GM12878 (cell line): ENCODE measurements at regions of chrX and their contacts with region 1.

Region 1: GRCh38 chrX:19904778-19905367 is 17.5 kb upstream of the SH3KBP1 start:
- DNase-seq: no peak
- ATAC-seq: peak; percentile 93
- H3K4me3 ChIP-seq: no peak overlapping the region
- H3K27ac ChIP-seq: no peak overlapping the region
- H3K4me1 ChIP-seq: no peaks in the 10 kb centered on the region; the same call in 1 of the 2 replicates
- H3K27me3 ChIP-seq: no peaks in the 10 kb centered on the region
- CTCF ChIP-seq: peak; percentile 79 to 84 (median 80)
- EP300 ChIP-seq: no peak
- POLR2A ChIP-seq: no peak
- RAD21 ChIP-seq: peak; percentile 88

Region 2: DNA sequence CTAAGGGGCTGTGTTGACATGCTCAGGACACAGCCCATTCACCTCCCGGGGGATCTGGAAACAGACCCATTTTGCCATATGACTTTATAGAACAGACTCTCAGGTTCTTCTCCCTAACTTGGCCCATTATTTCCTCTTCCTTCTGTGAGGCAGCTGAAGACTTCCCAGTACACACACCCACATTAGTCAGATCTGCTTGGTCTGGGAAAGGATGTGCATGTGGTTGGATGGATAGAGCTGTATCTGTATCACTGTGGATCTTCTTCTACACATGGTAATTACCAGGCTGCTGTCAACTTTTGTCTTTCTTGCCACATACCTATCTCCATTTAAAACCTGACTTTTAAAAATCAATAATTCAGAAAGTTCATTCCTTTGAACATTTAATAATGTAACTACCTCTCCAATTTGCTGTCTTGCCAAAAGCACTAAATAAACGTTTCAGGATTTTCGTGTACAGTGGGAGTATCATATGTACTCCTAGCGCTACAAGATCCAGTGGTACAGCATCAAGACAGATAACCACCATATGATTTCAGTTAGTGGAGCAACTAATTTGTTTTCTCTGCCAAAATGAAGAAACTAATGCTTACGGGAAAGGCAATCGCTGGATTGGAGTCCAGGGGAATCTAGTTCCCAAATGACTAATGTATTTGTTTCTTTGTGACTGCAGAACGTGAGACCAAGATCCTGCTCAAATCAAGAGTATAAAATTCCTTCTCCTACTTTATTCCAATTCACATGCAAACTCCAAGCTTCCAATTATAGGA is 255.5 kb before region 1 on chrX:
- CTCF ChIA-PET with region 1: no interaction called
- POLR2A ChIA-PET with region 1: no interaction called
- RAD21 ChIA-PET with region 1: no interaction called
- SMC1A ChIA-PET with region 1: no interaction called
- in situ Hi-C with region 1: no loop called
- intact Hi-C with region 1: no loop called
- DNase-seq: no peak
- ATAC-seq: no peak
- H3K4me3 ChIP-seq: no peak overlapping the region
- H3K27ac ChIP-seq: no peak overlapping the region
- H3K4me1 ChIP-seq: no peaks in the 10 kb centered on the region
- H3K27me3 ChIP-seq: no peaks in the 10 kb centered on the region
- CTCF ChIP-seq: no peak
- EP300 ChIP-seq: no peak
- POLR2A ChIP-seq: no peak
- RAD21 ChIP-seq: no peak

Region 3: GRCh38 chrX:19893711-19894110 is 11.2 kb before region 1 on chrX:
- CTCF ChIA-PET with region 1: interaction called, 10 read pairs
- POLR2A ChIA-PET with region 1: no interaction called
- RAD21 ChIA-PET with region 1: interaction called, 5 read pairs
- SMC1A ChIA-PET with region 1: interaction called, 11 read pairs
- in situ Hi-C with region 1: no loop called
- intact Hi-C with region 1: no loop called
- DNase-seq: no peak
- ATAC-seq: no peak
- H3K4me3 ChIP-seq: no peak overlapping the region
- H3K27ac ChIP-seq: no peak overlapping the region
- H3K4me1 ChIP-seq: peaks cover 9% of the 10 kb centered on the region; the same call in 1 of the 2 replicates
- H3K27me3 ChIP-seq: no peaks in the 10 kb centered on the region
- CTCF ChIP-seq: no peak
- EP300 ChIP-seq: no peak
- POLR2A ChIP-seq: no peak
- RAD21 ChIP-seq: no peak

Region 4: GRCh38 chrX:19915754-19916153 is 10.9 kb after region 1 on chrX:
- CTCF ChIA-PET with region 1: interaction called, 10 read pairs
- POLR2A ChIA-PET with region 1: no interaction called
- RAD21 ChIA-PET with region 1: no interaction called
- SMC1A ChIA-PET with region 1: interaction called, 5 read pairs
- in situ Hi-C with region 1: no loop called
- intact Hi-C with region 1: no loop called
- DNase-seq: no peak
- ATAC-seq: no peak
- H3K4me3 ChIP-seq: no peak overlapping the region
- H3K27ac ChIP-seq: no peak overlapping the region
- H3K4me1 ChIP-seq: no peaks in the 10 kb centered on the region
- H3K27me3 ChIP-seq: no peaks in the 10 kb centered on the region
- CTCF ChIP-seq: no peak
- EP300 ChIP-seq: no peak
- POLR2A ChIP-seq: no peak
- RAD21 ChIP-seq: no peak

Region 5: GRCh38 chrX:19990556-19991349 is 85.9 kb after region 1 on chrX and contains the start of gene BCLAF3:
- CTCF ChIA-PET with region 1: interaction called, 14 read pairs
- POLR2A ChIA-PET with region 1: interaction called, 3 read pairs
- RAD21 ChIA-PET with region 1: interaction called, 19 read pairs
- SMC1A ChIA-PET with region 1: interaction called, 19 read pairs
- in situ Hi-C with region 1: loop called (anchors 5 kb)
- intact Hi-C with region 1: loop called (anchors 1 kb)
- DNase-seq: peak; percentile 30
- ATAC-seq: peak; percentile 94
- H3K4me3 ChIP-seq: peak within 1 kb of the TSS; percentile 67
- H3K27ac ChIP-seq: no peak within 1 kb of the TSS
- H3K4me1 ChIP-seq: no peaks in the 10 kb centered on the region
- H3K27me3 ChIP-seq: no peaks in the 10 kb centered on the region
- CTCF ChIP-seq: peak; percentile 64 to 82 (median 65); a peak in 5 of 6 replicates
- EP300 ChIP-seq: no peak
- POLR2A ChIP-seq: peak; percentile 56; the same call in 1 of the 2 replicates
- RAD21 ChIP-seq: peak; percentile 73
- polyA plus RNA-seq, gene BCLAF3: 1.1 to 1.5 TPM

Region 6: DNA sequence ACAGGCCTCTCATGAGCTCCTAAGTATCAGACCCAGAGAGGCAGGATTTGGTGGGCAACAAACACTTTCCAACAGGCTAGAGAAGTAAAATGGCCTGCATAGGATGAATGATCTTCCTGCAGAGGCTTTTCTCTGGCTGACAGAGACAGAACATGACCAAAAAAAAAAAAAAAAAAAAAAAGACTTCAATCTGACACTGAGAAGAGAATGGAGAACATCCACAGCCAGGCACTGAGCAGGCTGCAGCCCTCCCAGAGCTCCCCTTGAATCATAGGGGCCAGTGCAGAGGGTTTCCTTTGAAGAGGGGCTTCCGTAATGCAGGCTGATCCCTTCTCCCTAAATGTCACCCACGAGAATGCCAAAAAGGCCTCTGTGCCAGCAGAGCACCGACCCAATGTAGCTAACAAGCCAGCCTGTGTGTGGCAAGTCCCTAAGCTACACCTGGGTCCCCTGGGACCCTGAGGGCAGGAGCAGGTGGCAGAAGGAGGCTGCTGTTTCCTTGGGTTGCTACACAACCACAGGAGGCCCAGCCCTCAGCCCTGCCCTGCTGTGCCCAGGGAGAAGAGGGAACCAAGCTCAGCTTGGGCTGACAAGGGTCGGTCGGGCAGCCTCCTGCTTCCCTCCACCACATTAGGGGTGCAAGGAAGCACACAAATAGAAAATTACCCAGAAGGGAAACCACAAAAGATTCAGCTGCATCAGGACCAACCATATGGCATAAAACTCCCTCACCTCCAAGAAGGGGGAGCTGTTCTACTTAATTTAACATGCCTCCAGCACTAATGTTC is 156.3 kb after region 1 on chrX:
- CTCF ChIA-PET with region 1: interaction called, 183 read pairs
- POLR2A ChIA-PET with region 1: interaction called, 7 read pairs
- RAD21 ChIA-PET with region 1: interaction called, 60 read pairs
- SMC1A ChIA-PET with region 1: interaction called, 90 read pairs
- in situ Hi-C with region 1: loop called (anchors 25 kb)
- intact Hi-C with region 1: no loop called
- DNase-seq: peak; percentile 53
- ATAC-seq: peak; percentile 83
- H3K4me3 ChIP-seq: no peak overlapping the region
- H3K27ac ChIP-seq: no peak overlapping the region
- H3K4me1 ChIP-seq: no peaks in the 10 kb centered on the region
- H3K27me3 ChIP-seq: no peaks in the 10 kb centered on the region
- CTCF ChIP-seq: 0 out of 6 replicates have a peak, but pooled peaks of 1 of the 3 experiments have one; percentile 7
- EP300 ChIP-seq: no peak
- POLR2A ChIP-seq: no peak
- RAD21 ChIP-seq: no peak

Region 7: GRCh38 chrX:20128670-20129069 is 223.8 kb after region 1 on chrX:
- CTCF ChIA-PET with region 1: interaction called, 10 read pairs
- POLR2A ChIA-PET with region 1: no interaction called
- RAD21 ChIA-PET with region 1: interaction called, 5 read pairs
- SMC1A ChIA-PET with region 1: interaction called, 7 read pairs
- in situ Hi-C with region 1: no loop called
- intact Hi-C with region 1: loop called (anchors 5 kb)
- DNase-seq: no peak
- ATAC-seq: no peak
- H3K4me3 ChIP-seq: no peak overlapping the region
- H3K27ac ChIP-seq: no peak overlapping the region
- H3K4me1 ChIP-seq: no peaks in the 10 kb centered on the region
- H3K27me3 ChIP-seq: no peaks in the 10 kb centered on the region
- CTCF ChIP-seq: no peak
- EP300 ChIP-seq: no peak
- POLR2A ChIP-seq: no peak
- RAD21 ChIP-seq: no peak

Region 8: GRCh38 chrX:20442597-20442996 is 537.7 kb after region 1 on chrX:
- CTCF ChIA-PET with region 1: interaction called, 4 read pairs
- POLR2A ChIA-PET with region 1: no interaction called
- RAD21 ChIA-PET with region 1: no interaction called
- SMC1A ChIA-PET with region 1: no interaction called
- in situ Hi-C with region 1: loop called (anchors 10 kb)
- intact Hi-C with region 1: loop called (anchors 10 kb)
- DNase-seq: no peak
- ATAC-seq: peak; percentile 98
- H3K4me3 ChIP-seq: no peak overlapping the region
- H3K27ac ChIP-seq: no peak overlapping the region
- H3K4me1 ChIP-seq: peaks cover 3% of the 10 kb centered on the region; the same call in 1 of the 2 replicates
- H3K27me3 ChIP-seq: no peaks in the 10 kb centered on the region; a peak in 1 of 4 replicates
- CTCF ChIP-seq: peak; percentile 69 to 76 (median 71)
- EP300 ChIP-seq: no peak
- POLR2A ChIP-seq: no peak
- RAD21 ChIP-seq: peak; percentile 89